A673 (cell line): ENCODE measurements at regions of chr1 and their contacts with region 1.

Region 1: DNA sequence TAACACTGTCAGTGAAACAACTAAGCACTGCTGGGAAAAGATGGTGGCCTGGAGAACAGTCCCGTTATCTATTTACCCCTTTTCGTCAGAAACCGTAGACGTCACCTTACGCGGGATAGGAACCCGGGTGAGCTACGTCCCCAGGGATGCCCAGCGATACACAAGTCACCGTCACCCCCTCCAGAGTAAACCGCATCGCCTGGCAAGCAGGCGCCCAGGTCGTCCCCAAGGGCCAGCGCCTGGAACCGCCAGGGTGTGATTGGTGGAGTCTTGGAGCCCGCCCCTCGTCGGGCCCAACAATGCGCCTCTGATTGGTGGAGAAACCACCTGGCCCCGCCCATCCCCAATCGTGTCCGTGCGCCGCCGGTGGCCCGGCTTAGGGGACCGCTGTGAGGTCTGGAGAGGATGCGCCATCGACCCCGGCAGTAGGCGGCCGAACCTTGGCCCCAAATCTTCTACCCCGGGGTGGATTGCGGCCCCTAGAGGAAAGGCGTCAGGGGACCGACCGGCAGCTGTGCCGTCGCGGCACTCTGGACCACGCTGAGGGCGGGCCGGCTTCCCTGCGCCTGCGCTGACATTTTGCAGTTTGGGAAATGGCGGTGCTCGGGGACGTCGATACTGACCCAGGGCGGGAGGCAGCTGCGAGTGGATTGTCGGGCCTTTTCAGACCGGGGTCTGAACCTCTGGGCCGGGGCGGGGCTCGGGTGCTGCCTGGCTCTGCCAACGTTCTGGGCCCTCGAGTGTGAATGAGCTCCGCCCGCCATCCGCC is 34.4 kb downstream of the SLC2A1 start:
- DNase-seq: peak; percentile 96
- H3K4me3 ChIP-seq: peak overlapping the region; percentile 69
- H3K27ac ChIP-seq: peak overlapping the region; percentile 53
- H3K4me1 ChIP-seq: peaks cover 10% of the 10 kb centered on the region
- H3K27me3 ChIP-seq: no peaks in the 10 kb centered on the region
- CTCF ChIP-seq: no peak

Region 2: DNA sequence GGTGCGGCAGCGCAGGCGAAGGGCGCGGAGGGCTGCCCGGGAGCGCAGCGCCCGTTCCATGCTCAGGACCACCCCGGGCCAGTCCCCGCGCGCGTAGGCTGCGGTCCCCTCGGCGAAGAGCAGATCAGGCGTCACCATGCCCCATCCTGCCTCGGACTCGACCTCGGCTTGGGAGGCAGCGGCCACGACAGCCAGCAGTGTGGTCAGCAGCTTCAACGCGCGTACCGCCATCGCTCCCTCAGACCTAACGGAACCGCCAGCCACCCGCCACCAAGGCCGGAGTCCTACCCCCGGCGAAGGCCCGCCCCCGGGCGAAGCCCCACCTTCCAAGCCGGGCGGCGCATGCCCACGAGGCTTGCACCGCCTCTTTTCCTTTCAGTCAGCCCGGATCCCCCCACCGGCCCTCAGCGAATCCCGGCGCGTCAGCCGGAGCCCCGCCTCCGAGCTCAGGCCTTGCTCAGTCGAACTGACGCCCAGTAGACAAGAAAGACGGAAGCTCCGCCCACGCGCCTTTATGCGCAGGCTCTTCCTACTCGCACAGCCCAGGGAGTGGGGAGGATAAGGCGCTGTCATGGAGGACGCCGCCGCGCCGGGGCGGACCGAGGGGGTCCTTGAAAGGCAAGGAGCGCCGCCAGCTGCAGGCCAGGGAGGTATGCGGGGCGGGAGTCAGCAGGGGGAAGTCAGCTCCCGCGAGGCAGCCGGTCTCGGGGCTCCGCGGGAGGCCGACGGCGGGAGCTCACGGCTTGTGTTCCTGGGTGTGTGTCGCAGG is 157.3 kb before region 1 on chr1 and contains the starts of genes C1orf50 and P3H1:
- CTCF ChIA-PET with region 1: no interaction called
- POLR2A ChIA-PET with region 1: interaction called, 12 read pairs
- intact Hi-C with region 1: loop called (anchors 10 kb)
- DNase-seq: peak; percentile 100
- H3K4me3 ChIP-seq: peak within 1 kb of the TSS; percentile 83
- H3K27ac ChIP-seq: peak within 1 kb of the TSS; percentile 89
- H3K4me1 ChIP-seq: peaks cover 17% of the 10 kb centered on the region
- H3K27me3 ChIP-seq: no peaks in the 10 kb centered on the region
- CTCF ChIP-seq: no peak
- total RNA-seq, gene C1orf50: 13.1 and 14.7 TPM in 2 replicates
- total RNA-seq, gene P3H1: 57.8 and 64.9 TPM in 2 replicates

Region 3: DNA sequence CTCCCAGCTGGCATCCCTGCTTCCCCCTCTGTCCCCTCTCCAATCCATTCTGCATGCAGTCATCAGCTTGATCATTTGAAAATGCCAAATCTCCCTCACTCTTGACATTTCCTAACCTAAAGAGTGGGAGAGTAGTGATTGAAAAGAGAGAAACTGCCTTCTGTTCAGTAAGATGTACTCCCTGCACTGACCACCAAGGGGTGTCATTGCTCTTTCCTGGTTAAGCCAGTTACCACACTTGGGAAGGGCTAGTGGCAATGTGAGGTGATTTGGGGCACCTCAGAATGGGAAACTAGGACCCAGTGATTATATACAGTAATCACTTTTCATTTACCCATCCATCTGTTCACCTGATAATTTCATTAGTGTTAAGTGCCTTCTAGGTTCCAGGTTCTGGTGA is 146.4 kb before region 1 on chr1:
- CTCF ChIA-PET with region 1: no interaction called
- POLR2A ChIA-PET with region 1: no interaction called
- intact Hi-C with region 1: loop called (anchors 10 kb)
- DNase-seq: peak; percentile 59
- H3K4me3 ChIP-seq: no peak overlapping the region
- H3K27ac ChIP-seq: no peak overlapping the region
- H3K4me1 ChIP-seq: no peaks in the 10 kb centered on the region
- H3K27me3 ChIP-seq: no peaks in the 10 kb centered on the region
- CTCF ChIP-seq: peak; percentile 77

Region 4: DNA sequence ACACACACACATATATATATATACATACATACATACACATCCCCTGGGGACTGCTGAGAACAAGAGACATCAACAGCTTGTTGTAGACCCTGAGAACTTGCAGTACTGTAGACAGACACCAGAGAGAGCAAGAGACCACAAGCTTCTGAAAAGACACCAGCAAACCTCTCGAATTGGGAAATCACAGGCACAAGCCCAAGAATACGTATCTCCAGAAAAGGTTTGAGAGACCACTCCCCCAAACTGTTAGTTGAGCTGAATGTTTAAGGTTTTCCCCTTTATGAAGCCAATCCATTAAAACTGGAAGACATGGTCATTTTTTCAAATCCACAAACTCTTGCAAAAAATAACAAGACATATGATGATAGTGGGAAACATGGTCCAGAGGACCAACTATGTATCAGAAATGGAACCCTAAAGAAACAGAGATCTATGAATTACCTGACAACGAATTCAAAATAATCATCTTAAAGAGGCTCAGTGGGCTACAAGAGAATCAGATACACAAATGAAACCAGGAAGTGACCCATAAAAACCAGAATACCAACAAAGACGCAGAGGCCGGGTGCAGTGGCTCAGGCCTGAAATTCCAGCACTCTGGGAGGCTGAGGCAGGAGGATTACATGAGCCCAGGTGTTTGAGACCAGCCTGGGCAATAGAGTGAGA is 10.7 kb before region 1 on chr1:
- CTCF ChIA-PET with region 1: interaction called, 15 read pairs
- POLR2A ChIA-PET with region 1: no interaction called
- intact Hi-C with region 1: no loop called
- DNase-seq: peak; percentile 90
- H3K4me3 ChIP-seq: no peak overlapping the region
- H3K27ac ChIP-seq: no peak overlapping the region
- H3K4me1 ChIP-seq: no peaks in the 10 kb centered on the region
- H3K27me3 ChIP-seq: no peaks in the 10 kb centered on the region
- CTCF ChIP-seq: peak; percentile 67

Region 5: GRCh38 chr1:43622471-43622870 is 698.2 kb after region 1 on chr1:
- CTCF ChIA-PET with region 1: no interaction called
- POLR2A ChIA-PET with region 1: no interaction called
- intact Hi-C with region 1: no loop called
- DNase-seq: no peak
- H3K4me3 ChIP-seq: no peak overlapping the region
- H3K27ac ChIP-seq: no peak overlapping the region
- H3K4me1 ChIP-seq: no peaks in the 10 kb centered on the region
- H3K27me3 ChIP-seq: no peaks in the 10 kb centered on the region
- CTCF ChIP-seq: no peak